Activated T-helper 2 cell treated with anti-CD3 and anti-CD28 coated beads, Interferon-gamma antibody, Interleukin-2, Interleukin-4, amounts not matched to agents 10 μg/mL and 5 μg/mL and 100 μg/mL, durations not matched to agents 14 hours and 24 hours and 36 hours (primary cell): ENCODE measurements at regions of chr15 and their contacts with region 1.

Region 1: GRCh38 chr15:92663250-92663951 is 7.8 kb upstream of the FAM174B start:
- DNase-seq: no peak
- H3K4me3 Mint-ChIP-seq: no peak overlapping the region
- H3K27ac Mint-ChIP-seq: no peak overlapping the region
- H3K4me1 Mint-ChIP-seq: peaks cover 11% of the 10 kb centered on the region
- H3K27me3 Mint-ChIP-seq: peaks cover 25% of the 10 kb centered on the region

Region 2: DNA sequence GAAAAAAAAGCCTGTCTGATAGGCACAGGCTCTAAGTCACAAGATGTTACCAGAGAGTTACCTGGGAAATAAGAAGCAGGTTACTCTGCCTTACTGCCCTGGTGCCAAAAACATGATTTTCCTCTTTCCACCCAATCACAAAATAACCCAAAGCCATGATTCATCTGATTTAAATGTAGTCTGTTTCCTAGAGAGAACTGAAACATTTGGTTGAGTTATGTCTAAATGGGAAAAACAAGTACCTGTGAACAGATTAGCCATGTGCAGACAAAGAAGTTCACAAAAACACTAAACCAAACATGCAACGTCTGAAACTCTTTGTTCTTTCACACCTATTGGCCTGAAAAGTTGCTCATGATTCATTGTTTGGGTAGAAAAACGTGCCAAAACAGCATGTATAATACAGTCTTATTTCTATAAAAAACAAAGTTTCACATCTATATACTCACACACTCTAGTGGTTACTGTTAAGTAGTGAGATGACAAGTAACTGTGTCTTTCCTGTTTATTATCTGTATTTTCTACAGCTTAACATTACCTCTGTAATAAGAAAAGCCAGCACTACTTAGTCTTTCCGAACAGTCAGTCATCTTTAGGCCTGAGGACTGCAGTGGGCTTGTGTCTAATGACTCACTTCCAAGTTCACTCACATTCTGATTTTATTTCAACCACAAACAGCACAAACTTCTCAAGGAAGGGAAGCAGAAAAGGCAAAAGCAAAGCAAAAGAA is 38.0 kb before region 1 on chr15:
- intact Hi-C with region 1: loop called (anchors 1 kb)
- DNase-seq: no peak
- H3K4me3 Mint-ChIP-seq: peak overlapping the region; percentile 19
- H3K27ac Mint-ChIP-seq: peak overlapping the region; percentile 86
- H3K4me1 Mint-ChIP-seq: peaks cover 12% of the 10 kb centered on the region
- H3K27me3 Mint-ChIP-seq: peaks cover 2% of the 10 kb centered on the region

Region 3: DNA sequence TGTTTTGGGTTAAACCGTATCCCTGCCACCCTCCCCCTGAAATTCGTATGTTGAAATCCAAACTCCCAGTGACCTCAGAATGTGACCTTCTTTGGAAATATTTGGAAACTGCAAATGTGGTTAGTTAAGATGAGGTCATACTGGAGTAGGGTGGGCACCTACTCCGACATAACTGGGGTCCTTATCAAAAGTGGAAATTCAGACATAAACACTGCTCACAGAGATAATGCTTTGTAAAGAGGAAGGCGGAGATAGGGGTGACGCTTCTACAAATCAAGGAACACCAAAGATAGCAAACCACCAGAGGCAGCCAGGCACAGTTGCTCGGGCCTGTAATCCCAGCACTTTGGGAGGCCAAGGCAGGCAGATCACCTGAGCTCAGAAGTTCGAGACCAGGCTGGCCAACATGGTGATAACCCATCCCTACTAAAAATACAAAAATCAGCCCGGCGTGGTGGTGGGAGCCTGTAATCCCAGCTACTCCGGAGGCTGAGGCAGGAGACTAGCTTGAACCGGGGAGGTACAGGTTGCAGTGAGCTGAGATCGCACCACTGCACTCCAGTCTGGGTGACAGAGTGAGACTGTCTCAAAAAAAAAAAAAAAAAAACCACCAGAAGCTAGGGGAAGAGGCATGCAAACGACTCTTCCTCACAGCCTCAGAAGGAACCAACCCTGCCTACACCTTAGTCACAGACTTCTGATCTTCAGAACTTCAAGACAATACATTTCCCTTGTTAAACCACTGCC is 185.6 kb after region 1 on chr15:
- intact Hi-C with region 1: no loop called
- DNase-seq: no peak
- H3K4me3 Mint-ChIP-seq: no peak overlapping the region
- H3K27ac Mint-ChIP-seq: peak overlapping the region; percentile 47
- H3K4me1 Mint-ChIP-seq: peaks cover 33% of the 10 kb centered on the region
- H3K27me3 Mint-ChIP-seq: no peaks in the 10 kb centered on the region